ENCODE measurements at regions of chr1 and their contacts with region 1.

Region 1: GRCh38 chr1:52683367-52683940 is 14.7 kb downstream of the COA7 start:
- DNase-seq: no peak
- ATAC-seq: peak; percentile 37
- H3K4me3 Mint-ChIP-seq: no peak overlapping the region
- H3K27ac Mint-ChIP-seq: no peak overlapping the region
- H3K4me1 Mint-ChIP-seq: peaks cover 8% of the 10 kb centered on the region
- H3K27me3 Mint-ChIP-seq: no peaks in the 10 kb centered on the region

Region 2: DNA sequence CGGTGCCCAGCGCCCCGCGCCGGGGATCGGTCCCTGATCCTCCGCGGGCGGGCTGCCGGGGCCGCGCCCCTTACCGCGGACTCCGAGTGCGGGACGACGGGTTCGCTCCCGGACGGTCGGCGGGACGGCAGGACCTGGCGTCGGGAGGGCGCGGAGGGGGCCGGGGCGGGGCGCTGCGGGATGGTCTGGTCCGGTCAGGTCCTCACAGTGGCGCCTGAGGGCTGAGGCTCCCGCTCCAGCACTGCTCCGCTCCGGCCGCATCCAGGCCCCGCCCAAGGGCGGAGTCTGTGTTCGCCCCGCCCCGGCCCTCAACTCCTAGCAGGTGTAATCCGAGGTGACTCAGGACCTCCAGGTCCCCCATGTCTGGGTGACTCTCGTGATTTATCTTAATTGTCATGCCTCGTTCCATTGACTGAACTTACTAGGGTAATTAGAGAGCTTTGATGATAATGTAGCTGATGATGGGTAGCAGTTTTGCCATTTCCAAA is 692.9 kb before region 1 on chr1 and contains the start of gene RAB3B:
- CTCF ChIA-PET with region 1: no interaction called
- POLR2A ChIA-PET with region 1: no interaction called
- intact Hi-C with region 1: no loop called
- DNase-seq: peak; percentile 89
- ATAC-seq: peak; percentile 99
- H3K4me3 Mint-ChIP-seq: peak within 1 kb of the TSS; percentile 68
- H3K27ac Mint-ChIP-seq: no peak within 1 kb of the TSS
- H3K4me1 Mint-ChIP-seq: peaks cover 9% of the 10 kb centered on the region
- H3K27me3 Mint-ChIP-seq: peaks cover 32% of the 10 kb centered on the region
- total RNA-seq, gene RAB3B: 0.07 to 0.11 TPM

Region 3: DNA sequence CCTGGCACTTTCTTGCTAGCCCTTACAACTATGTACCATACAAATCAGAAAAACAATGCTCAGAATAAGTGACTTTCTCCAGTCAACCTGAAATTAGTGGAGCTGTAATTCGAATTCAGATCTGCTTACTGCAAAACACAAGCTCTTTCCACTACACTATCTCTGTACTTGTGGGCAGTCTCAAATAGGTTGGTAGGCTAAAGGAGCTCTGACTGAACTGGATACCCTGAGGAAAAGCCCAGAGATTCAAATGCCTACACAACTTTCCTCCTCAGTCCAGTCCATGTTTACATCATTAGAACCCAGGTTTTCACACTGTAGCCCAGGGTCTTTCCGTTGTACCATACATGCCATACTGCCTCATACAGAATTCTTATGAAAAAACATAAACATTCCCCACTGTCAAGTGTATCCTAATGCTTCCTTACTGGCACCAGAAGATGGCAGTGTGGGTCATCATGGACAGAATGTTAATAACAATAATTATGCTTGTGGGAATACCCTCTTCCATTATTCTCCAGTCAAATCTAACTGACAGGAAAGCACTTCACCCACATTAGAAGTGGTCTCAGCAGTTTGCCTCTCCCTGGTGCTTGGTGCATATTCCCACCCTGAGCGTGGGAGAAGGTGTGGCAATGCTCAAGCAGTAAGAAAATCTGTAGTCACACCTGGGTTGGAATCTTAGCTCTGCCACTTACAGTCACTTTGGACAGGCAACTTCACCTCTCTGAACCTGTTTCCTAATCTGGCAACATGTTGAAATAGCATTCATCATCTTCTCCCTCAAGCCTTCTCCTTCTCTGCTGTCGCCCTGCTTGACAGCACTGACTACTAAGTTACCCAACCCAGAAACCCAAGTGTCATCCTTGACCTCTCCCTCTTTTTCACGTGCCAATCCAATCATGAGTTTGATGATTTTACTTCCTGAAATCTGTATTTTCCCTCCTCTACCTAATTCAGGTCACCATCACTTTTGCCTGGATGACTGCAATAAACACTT is 556.0 kb before region 1 on chr1:
- CTCF ChIA-PET with region 1: no interaction called
- POLR2A ChIA-PET with region 1: no interaction called
- intact Hi-C with region 1: loop called in 1 of 2 experiments (anchors 5 kb)
- DNase-seq: peak; percentile 39
- ATAC-seq: peak; percentile 65
- H3K4me3 Mint-ChIP-seq: no peak overlapping the region
- H3K27ac Mint-ChIP-seq: no peak overlapping the region
- H3K4me1 Mint-ChIP-seq: peaks cover 4% of the 10 kb centered on the region
- H3K27me3 Mint-ChIP-seq: peaks cover 14% of the 10 kb centered on the region

Region 4: GRCh38 chr1:52141513-52142219 is 541.8 kb before region 1 on chr1 and contains the start of gene ZFYVE9:
- CTCF ChIA-PET with region 1: no interaction called
- POLR2A ChIA-PET with region 1: no interaction called
- intact Hi-C with region 1: loop called (anchors 5 to 10 kb)
- DNase-seq: peak; percentile 83
- ATAC-seq: peak; percentile 62
- H3K4me3 Mint-ChIP-seq: peak within 1 kb of the TSS; percentile 80
- H3K27ac Mint-ChIP-seq: peak within 1 kb of the TSS; percentile 84
- H3K4me1 Mint-ChIP-seq: peaks cover 43% of the 10 kb centered on the region
- H3K27me3 Mint-ChIP-seq: peaks cover 9% of the 10 kb centered on the region
- total RNA-seq, gene ZFYVE9: 4.3 to 4.7 TPM

Region 5: GRCh38 chr1:52424231-52424636 is 259.2 kb before region 1 on chr1:
- CTCF ChIA-PET with region 1: interaction called, 8 read pairs
- POLR2A ChIA-PET with region 1: no interaction called
- intact Hi-C with region 1: loop called in 1 of 2 experiments (anchors 5 kb)
- DNase-seq: peak; percentile 22
- ATAC-seq: peak; percentile 89
- H3K4me3 Mint-ChIP-seq: peak overlapping the region; percentile 47
- H3K27ac Mint-ChIP-seq: peak overlapping the region; percentile 73
- H3K4me1 Mint-ChIP-seq: peaks cover 46% of the 10 kb centered on the region
- H3K27me3 Mint-ChIP-seq: no peaks in the 10 kb centered on the region

Region 6: GRCh38 chr1:52627028-52627427 is 56.4 kb before region 1 on chr1:
- CTCF ChIA-PET with region 1: no interaction called
- POLR2A ChIA-PET with region 1: no interaction called
- intact Hi-C with region 1: no loop called
- DNase-seq: no peak
- ATAC-seq: no peak
- H3K4me3 Mint-ChIP-seq: no peak overlapping the region
- H3K27ac Mint-ChIP-seq: no peak overlapping the region
- H3K4me1 Mint-ChIP-seq: peaks cover 5% of the 10 kb centered on the region
- H3K27me3 Mint-ChIP-seq: no peaks in the 10 kb centered on the region

Region 7: GRCh38 chr1:52697795-52698674 is 14.6 kb after region 1 on chr1 and contains the start of gene COA7:
- CTCF ChIA-PET with region 1: interaction called, 19 read pairs
- POLR2A ChIA-PET with region 1: no interaction called
- intact Hi-C with region 1: no loop called
- DNase-seq: peak; percentile 83
- ATAC-seq: peak; percentile 50
- H3K4me3 Mint-ChIP-seq: peak within 1 kb of the TSS; percentile 93
- H3K27ac Mint-ChIP-seq: peak within 1 kb of the TSS; percentile 89
- H3K4me1 Mint-ChIP-seq: peaks cover 23% of the 10 kb centered on the region
- H3K27me3 Mint-ChIP-seq: no peaks in the 10 kb centered on the region
- total RNA-seq, gene COA7: 11.0 to 17.2 TPM

Region 8: GRCh38 chr1:52739699-52740467 is 56.4 kb after region 1 on chr1:
- CTCF ChIA-PET with region 1: no interaction called
- POLR2A ChIA-PET with region 1: no interaction called
- intact Hi-C with region 1: no loop called
- DNase-seq: no peak
- ATAC-seq: no peak
- H3K4me3 Mint-ChIP-seq: no peak overlapping the region
- H3K27ac Mint-ChIP-seq: no peak overlapping the region
- H3K4me1 Mint-ChIP-seq: peaks cover 18% of the 10 kb centered on the region
- H3K27me3 Mint-ChIP-seq: no peaks in the 10 kb centered on the region